ENCODE measurements at regions of chr5 and their contacts with region 1.

Region 1: GRCh38 chr5:136802383-136802782 is 437.0 kb upstream of the TRPC7 start:
- DNase-seq: peak; percentile 58
- H3K4me3 ChIP-seq: no peak overlapping the region
- H3K27ac ChIP-seq: no peak overlapping the region
- H3K4me1 ChIP-seq: no peaks in the 10 kb centered on the region
- H3K27me3 ChIP-seq: peaks cover 3 to 12% of the 10 kb centered on the region in 2 experiments
- CTCF ChIP-seq: no peak
- POLR2A ChIP-seq: no peak

Region 2: GRCh38 chr5:136750224-136750862 is 52.0 kb before region 1 on chr5:
- CTCF ChIA-PET with region 1: no interaction called
- POLR2A ChIA-PET with region 1: no interaction called
- dilution Hi-C with region 1: no loop called
- intact Hi-C with region 1: no loop called
- DNase-seq: no peak
- H3K4me3 ChIP-seq: no peak overlapping the region
- H3K27ac ChIP-seq: no peak overlapping the region
- H3K4me1 ChIP-seq: no peaks in the 10 kb centered on the region
- H3K27me3 ChIP-seq: peaks cover 3 to 5% of the 10 kb centered on the region in 2 experiments
- CTCF ChIP-seq: no peak
- POLR2A ChIP-seq: no peak

Region 3: GRCh38 chr5:137091472-137091871 is 289.1 kb after region 1 on chr5:
- CTCF ChIA-PET with region 1: no interaction called
- POLR2A ChIA-PET with region 1: no interaction called
- dilution Hi-C with region 1: no loop called
- intact Hi-C with region 1: no loop called
- DNase-seq: no peak
- H3K4me3 ChIP-seq: no peak overlapping the region
- H3K27ac ChIP-seq: no peak overlapping the region
- H3K4me1 ChIP-seq: no peaks in the 10 kb centered on the region
- H3K27me3 ChIP-seq: no peaks in the 10 kb centered on the region
- CTCF ChIP-seq: no peak
- POLR2A ChIP-seq: no peak

Region 4: DNA sequence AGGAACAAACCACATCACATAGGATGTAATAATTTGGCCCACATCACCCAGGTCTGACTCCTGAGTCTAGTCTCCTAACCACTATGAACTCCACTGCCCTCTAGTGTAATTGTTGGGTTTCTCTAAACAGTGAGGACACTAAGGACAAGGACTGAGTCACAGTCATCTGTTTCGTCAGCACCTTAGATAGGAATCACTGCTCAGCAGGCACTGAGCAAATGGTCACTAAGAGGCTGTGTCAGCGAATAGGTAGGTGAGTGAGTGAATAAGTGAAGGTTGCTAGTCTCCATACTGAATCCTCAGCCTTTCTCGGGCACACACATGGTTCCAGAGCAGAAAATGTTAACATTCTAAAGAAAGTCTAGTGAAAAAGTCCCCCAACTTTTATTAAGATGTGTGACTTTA is 418.1 kb after region 1 on chr5:
- CTCF ChIA-PET with region 1: interaction called, 10 read pairs
- POLR2A ChIA-PET with region 1: no interaction called
- dilution Hi-C with region 1: no loop called
- intact Hi-C with region 1: loop called (anchors 1 kb)
- DNase-seq: peak; percentile 80
- H3K4me3 ChIP-seq: no peak overlapping the region
- H3K27ac ChIP-seq: no peak overlapping the region
- H3K4me1 ChIP-seq: no peaks in the 10 kb centered on the region
- H3K27me3 ChIP-seq: no peaks in the 10 kb centered on the region
- CTCF ChIP-seq: peak; percentile 61 to 62
- POLR2A ChIP-seq: no peak

Region 5: GRCh38 chr5:137605411-137605810 is 803.0 kb after region 1 on chr5:
- CTCF ChIA-PET with region 1: interaction called, 28 read pairs
- POLR2A ChIA-PET with region 1: no interaction called
- dilution Hi-C with region 1: no loop called
- intact Hi-C with region 1: no loop called
- DNase-seq: peak; percentile 29
- H3K4me3 ChIP-seq: no peak overlapping the region
- H3K27ac ChIP-seq: no peak overlapping the region
- H3K4me1 ChIP-seq: no peaks in the 10 kb centered on the region
- H3K27me3 ChIP-seq: peaks cover 33% of the 10 kb centered on the region in 2 experiments
- CTCF ChIP-seq: peak in 1 of 2 donors; percentile 15
- POLR2A ChIP-seq: no peak